SK-N-SH (cell line): ENCODE measurements at regions of chr20 and their contacts with region 1.

Region 1: GRCh38 chr20:43537921-43538877 is 20.6 kb upstream of the SGK2 start:
- DNase-seq: peak; percentile 74
- H3K4me3 ChIP-seq: no peak overlapping the region; a peak in 1 of 4 replicates
- H3K27ac ChIP-seq: no peak overlapping the region; a peak in 1 of 4 replicates
- H3K4me1 ChIP-seq: peaks cover 0 to 1% of the 10 kb centered on the region in 2 experiments; a peak in 1 of 4 replicates
- H3K27me3 ChIP-seq: no peaks in the 10 kb centered on the region
- CTCF ChIP-seq: peak; percentile 93
- EP300 ChIP-seq: no peak
- RAD21 ChIP-seq: peak; percentile 90

Region 2: GRCh38 chr20:43003318-43003944 is 534.8 kb before region 1 on chr20:
- CTCF ChIA-PET with region 1: no interaction called
- POLR2A ChIA-PET with region 1: no interaction called
- DNase-seq: no peak
- H3K4me3 ChIP-seq: no peak overlapping the region
- H3K27ac ChIP-seq: no peak overlapping the region
- H3K4me1 ChIP-seq: no peaks in the 10 kb centered on the region
- H3K27me3 ChIP-seq: no peaks in the 10 kb centered on the region
- CTCF ChIP-seq: no peak
- EP300 ChIP-seq: no peak
- RAD21 ChIP-seq: no peak

Region 3: DNA sequence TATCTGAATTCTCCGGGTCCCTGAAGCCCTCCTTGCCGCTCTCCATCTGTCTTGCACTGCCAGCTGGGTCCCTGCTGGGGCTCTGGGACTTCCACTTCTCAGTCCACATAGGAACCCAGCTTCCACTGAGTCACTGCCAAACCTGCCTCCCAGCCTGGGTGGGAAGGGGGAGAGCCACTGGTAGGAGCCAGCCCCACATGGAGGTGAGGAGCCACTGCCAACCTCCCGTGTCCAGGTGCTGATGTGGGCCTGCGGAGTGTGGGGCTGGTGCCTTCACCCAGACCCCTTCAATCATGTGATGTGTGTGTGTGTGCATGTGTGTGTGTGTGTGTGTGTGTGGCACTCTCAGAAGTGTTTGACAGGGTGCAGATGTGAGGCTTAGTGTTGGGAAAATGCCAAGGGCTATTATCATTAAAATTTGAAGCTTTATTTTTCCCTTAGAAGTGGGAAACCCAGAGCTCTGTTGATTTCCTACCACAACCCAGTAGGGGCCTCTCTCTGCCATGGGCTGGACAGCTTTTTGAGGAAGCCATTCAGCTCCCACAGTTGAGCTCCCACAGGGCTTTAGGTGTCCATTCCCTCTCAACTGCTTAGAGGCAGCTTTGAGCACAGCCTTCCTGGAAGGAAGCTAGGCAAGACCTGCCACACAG is 11.3 kb after region 1 on chr20:
- CTCF ChIA-PET with region 1: interaction called, 41 read pairs
- POLR2A ChIA-PET with region 1: no interaction called
- DNase-seq: no peak
- H3K4me3 ChIP-seq: no peak overlapping the region
- H3K27ac ChIP-seq: no peak overlapping the region
- H3K4me1 ChIP-seq: no peaks in the 10 kb centered on the region; a peak in 1 of 4 replicates
- H3K27me3 ChIP-seq: no peaks in the 10 kb centered on the region
- CTCF ChIP-seq: no peak
- EP300 ChIP-seq: no peak
- RAD21 ChIP-seq: no peak

Region 4: DNA sequence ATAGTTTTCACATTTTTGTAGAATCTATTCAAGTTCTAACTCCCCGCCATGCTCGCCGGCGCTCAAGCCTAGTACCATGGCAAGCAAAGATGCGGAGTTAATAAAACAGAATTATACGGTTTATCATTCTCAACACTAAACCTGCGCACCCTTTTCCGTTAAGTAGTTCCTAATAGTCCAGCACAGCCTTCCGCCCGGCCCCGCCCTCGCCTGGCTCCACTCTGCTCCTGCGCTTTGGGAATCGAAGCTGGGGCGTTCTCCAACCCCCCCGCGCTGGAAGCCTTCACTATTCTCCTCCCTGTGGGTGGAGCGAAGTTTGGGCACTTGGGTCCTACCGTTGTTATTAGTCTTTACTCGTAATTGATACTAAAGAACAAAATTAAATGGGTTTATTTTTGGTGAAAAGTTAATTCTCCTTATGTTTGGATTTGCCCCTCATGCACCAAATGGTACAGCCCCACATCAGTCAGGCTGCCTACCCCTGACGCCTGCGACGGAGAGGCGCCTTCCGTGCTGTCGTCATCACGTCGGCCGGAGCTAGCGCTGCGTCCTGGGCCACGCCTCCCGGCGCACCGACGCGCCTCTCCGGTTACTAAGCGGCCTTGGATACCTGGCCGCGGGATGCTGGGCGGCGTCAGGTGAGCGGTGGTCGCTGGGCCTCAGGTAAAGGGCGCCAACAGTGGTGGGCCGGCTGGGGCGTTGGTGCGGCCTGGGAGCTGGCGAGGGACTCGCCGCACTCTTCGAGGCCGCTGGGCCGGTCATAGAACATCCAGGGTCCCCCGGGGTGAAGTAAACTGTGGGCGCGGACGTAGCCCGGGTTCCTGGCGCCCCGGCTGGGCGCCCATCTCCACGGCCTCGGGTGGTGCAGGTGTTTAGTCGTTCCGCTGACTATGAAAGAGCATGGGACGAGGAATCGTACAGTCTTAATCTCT is 52.5 kb after region 1 on chr20 and contains the start of gene IFT52:
- CTCF ChIA-PET with region 1: interaction called, 13 read pairs
- POLR2A ChIA-PET with region 1: interaction called, 4 read pairs
- DNase-seq: peak; percentile 93
- H3K4me3 ChIP-seq: peak within 1 kb of the TSS; percentile 72 to 75
- H3K27ac ChIP-seq: peak within 1 kb of the TSS; percentile 80 to 90
- H3K4me1 ChIP-seq: peaks cover 0 to 7% of the 10 kb centered on the region in 2 experiments; a peak in 1 of 4 replicates
- H3K27me3 ChIP-seq: no peaks in the 10 kb centered on the region
- CTCF ChIP-seq: no peak
- EP300 ChIP-seq: peak in 1 of 2 experiments; percentile 47; a peak in 1 of 4 replicates
- RAD21 ChIP-seq: no peak
- polyA plus RNA-seq, gene IFT52: 34.0 and 42.4 TPM in 2 replicates

Region 5: DNA sequence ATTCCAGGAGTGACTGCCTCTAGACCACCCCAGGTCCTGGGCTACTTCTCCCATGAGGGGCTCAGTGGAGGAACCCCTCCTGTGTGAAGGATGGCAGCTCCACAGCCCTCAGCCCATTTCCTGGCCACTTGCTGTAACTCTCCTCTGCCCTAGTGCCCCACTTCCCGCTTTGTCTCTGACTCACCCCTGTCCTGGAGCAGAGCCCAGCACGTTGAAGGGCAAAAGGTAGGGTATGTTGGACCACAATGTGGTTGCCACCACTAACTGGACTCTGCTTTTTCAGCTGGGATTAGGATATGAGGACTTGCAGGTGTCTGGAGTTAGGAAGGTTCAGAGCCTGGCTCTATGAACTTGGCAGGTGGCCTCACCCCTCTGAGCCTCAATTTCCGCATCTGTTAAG is 131.1 kb after region 1 on chr20:
- CTCF ChIA-PET with region 1: interaction called, 10 read pairs
- POLR2A ChIA-PET with region 1: no interaction called
- DNase-seq: no peak
- H3K4me3 ChIP-seq: no peak overlapping the region
- H3K27ac ChIP-seq: no peak overlapping the region
- H3K4me1 ChIP-seq: peaks cover 0 to 7% of the 10 kb centered on the region in 2 experiments; a peak in 1 of 4 replicates
- H3K27me3 ChIP-seq: no peaks in the 10 kb centered on the region
- CTCF ChIP-seq: no peak
- EP300 ChIP-seq: no peak
- RAD21 ChIP-seq: no peak

Region 6: GRCh38 chr20:43691928-43692524 is 153.8 kb after region 1 on chr20:
- CTCF ChIA-PET with region 1: interaction called, 31 read pairs
- POLR2A ChIA-PET with region 1: no interaction called
- DNase-seq: peak; percentile 82
- H3K4me3 ChIP-seq: no peak overlapping the region; a peak in 1 of 4 replicates
- H3K27ac ChIP-seq: no peak overlapping the region
- H3K4me1 ChIP-seq: no peaks in the 10 kb centered on the region
- H3K27me3 ChIP-seq: no peaks in the 10 kb centered on the region
- CTCF ChIP-seq: peak; percentile 73
- EP300 ChIP-seq: no peak
- RAD21 ChIP-seq: peak; percentile 72

Region 7: GRCh38 chr20:44080646-44081267 is 542.6 kb after region 1 on chr20:
- CTCF ChIA-PET with region 1: interaction called, 32 read pairs
- POLR2A ChIA-PET with region 1: no interaction called
- DNase-seq: peak; percentile 79
- H3K4me3 ChIP-seq: no peak overlapping the region; a peak in 1 of 4 replicates
- H3K27ac ChIP-seq: peak overlapping the region in 1 of 2 experiments; percentile 30; a peak in 1 of 4 replicates
- H3K4me1 ChIP-seq: peaks cover 7 to 17% of the 10 kb centered on the region in 2 experiments; a peak in 3 of 4 replicates
- H3K27me3 ChIP-seq: no peaks in the 10 kb centered on the region
- CTCF ChIP-seq: peak; percentile 98
- EP300 ChIP-seq: no peak
- RAD21 ChIP-seq: peak; percentile 99

Region 8: GRCh38 chr20:44092551-44093248 is 554.5 kb after region 1 on chr20:
- CTCF ChIA-PET with region 1: interaction called, 21 read pairs
- POLR2A ChIA-PET with region 1: no interaction called
- DNase-seq: peak; percentile 51
- H3K4me3 ChIP-seq: no peak overlapping the region; a peak in 1 of 4 replicates
- H3K27ac ChIP-seq: no peak overlapping the region
- H3K4me1 ChIP-seq: peaks cover 0 to 16% of the 10 kb centered on the region in 2 experiments; a peak in 1 of 4 replicates
- H3K27me3 ChIP-seq: no peaks in the 10 kb centered on the region
- CTCF ChIP-seq: peak; percentile 74
- EP300 ChIP-seq: no peak
- RAD21 ChIP-seq: peak; percentile 80